Heart left ventricle (tissue), 16 donors: ENCODE measurements at regions of chrX and their contacts with region 1.

Region 1: GRCh38 chrX:16695079-16695676 is 17.3 kb downstream of the CTPS2 start:
- DNase-seq: peak in 3 of 5 donors; percentile 18 to 47 (median 40)
- ATAC-seq: peak in 2 of 4 donors; percentile 60 to 64
- H3K4me3 ChIP-seq: no peak overlapping the region
- H3K27ac ChIP-seq: no peak overlapping the region
- H3K4me1 ChIP-seq: no peaks in the 10 kb centered on the region
- H3K27me3 ChIP-seq: peaks cover 0 to 9% (median 0%) of the 10 kb centered on the region in 9 donors
- CTCF ChIP-seq: peak; percentile 65 to 93 (median 74)
- POLR2A ChIP-seq: no peak

Region 2: DNA sequence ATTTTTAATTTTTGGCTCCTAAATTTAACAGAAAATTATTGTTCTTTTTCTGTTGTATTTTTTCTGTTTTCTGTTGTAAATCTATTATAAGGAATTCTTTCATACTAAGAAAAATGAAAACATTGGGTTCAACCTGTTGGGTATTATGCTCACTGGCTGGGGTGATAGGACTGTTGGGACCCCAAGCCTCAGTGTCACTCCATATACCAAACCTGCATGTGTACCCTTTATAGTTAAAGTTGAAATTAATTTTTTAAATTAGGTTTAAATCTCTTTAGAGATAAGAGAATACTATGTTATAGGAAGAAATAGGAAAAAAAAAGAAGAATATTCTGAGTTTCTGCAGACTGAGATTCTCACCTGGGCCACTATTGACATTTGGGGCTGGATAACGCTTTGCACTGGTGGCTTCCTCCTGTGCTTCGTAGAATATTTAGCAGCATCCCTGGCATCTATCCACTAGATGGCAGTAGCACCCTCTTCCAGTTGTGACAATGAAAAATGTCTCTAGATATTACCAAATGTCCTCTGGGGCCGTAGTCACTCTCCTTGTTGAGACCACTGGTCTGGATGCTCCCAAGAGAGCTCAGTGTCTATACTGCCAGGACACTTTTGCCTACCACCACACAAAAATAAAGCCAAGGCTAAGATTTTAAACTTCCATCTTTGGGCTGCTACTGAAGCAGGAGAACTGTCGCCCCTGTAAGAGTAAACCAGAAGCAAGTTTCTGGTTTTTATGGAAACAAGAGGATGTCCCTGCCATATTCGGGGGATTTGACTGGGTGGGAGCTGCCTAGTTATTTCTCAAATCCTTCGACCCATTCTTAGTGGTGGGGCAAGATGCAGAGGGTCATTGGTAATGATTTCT is 1008.1 kb before region 1 on chrX:
- intact Hi-C with region 1: loop called in 1 of 10 experiments (anchors 10 kb)
- DNase-seq: peak in 3 of 5 donors; percentile 34 to 41 (median 36)
- ATAC-seq: peak in 3 of 4 donors; percentile 69 to 86 (median 82)
- H3K4me3 ChIP-seq: no peak overlapping the region
- H3K27ac ChIP-seq: no peak overlapping the region
- H3K4me1 ChIP-seq: peaks cover 0 to 7% (median 0%) of the 10 kb centered on the region in 12 donors
- H3K27me3 ChIP-seq: no peaks in the 10 kb centered on the region
- CTCF ChIP-seq: peak; percentile 60 to 88 (median 67)
- POLR2A ChIP-seq: no peak

Region 3: GRCh38 chrX:15761564-15762191 is 933.5 kb before region 1 on chrX:
- intact Hi-C with region 1: loop called in 2 of 10 experiments (anchors 10 kb)
- DNase-seq: peak in 1 of 5 donors; percentile 14
- ATAC-seq: peak in 1 of 4 donors; percentile 44
- H3K4me3 ChIP-seq: no peak overlapping the region
- H3K27ac ChIP-seq: no peak overlapping the region
- H3K4me1 ChIP-seq: peaks cover 0 to 3% (median 0%) of the 10 kb centered on the region in 12 donors
- H3K27me3 ChIP-seq: no peaks in the 10 kb centered on the region
- CTCF ChIP-seq: peak; percentile 41 to 78 (median 61)
- POLR2A ChIP-seq: no peak

Region 4: DNA sequence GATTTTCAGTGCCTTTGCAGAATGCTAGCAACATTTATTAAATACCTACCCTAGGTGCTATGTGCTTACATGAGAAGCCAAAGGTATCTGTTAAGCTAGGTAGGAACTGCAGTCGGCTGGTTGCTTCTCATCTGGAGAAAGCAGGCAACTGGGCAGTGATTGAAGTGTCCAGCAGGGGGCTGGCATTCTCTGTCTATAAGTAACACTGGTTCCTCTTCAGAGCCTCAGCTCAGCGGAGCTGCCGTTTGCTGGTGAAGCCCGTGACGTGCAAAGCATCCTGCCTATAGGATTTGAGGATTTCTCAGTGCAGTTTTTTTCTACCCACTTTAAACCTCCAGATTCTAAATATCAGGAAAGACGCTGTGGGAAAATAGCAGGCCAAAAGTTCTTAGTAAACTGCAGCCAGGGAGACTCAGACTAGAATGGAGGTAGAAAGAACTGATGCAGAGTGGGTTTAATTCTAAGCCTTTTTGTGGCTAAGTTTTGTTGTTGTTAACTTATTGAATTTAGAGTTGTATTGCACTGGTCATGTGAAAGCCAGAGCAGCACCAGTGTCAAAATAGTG is 571.9 kb before region 1 on chrX and contains the start of gene GRPR:
- intact Hi-C with region 1: loop called in 1 of 10 experiments (anchors 10 kb)
- DNase-seq: peak; percentile 54 to 84 (median 70)
- ATAC-seq: peak; percentile 75 to 94 (median 90)
- H3K4me3 ChIP-seq: no peak within 1 kb of the TSS
- H3K27ac ChIP-seq: no peak within 1 kb of the TSS
- H3K4me1 ChIP-seq: no peaks in the 10 kb centered on the region
- H3K27me3 ChIP-seq: peaks cover 0 to 43% (median 0%) of the 10 kb centered on the region in 9 donors
- CTCF ChIP-seq: peak; percentile 42 to 76 (median 64)
- POLR2A ChIP-seq: no peak
- total RNA-seq, gene GRPR: 0.16 to 0.58 (median 0.29) TPM

Region 5: GRCh38 chrX:16807548-16807947 is 112.4 kb after region 1 on chrX:
- intact Hi-C with region 1: no loop called
- DNase-seq: no peak
- ATAC-seq: peak in 3 of 4 donors; percentile 50 to 55 (median 54)
- H3K4me3 ChIP-seq: peak overlapping the region in 5 of 12 donors; percentile 25 to 52 (median 40)
- H3K27ac ChIP-seq: peak overlapping the region in 4 of 12 donors; percentile 9 to 42 (median 28)
- H3K4me1 ChIP-seq: peaks cover 0 to 17% (median 5%) of the 10 kb centered on the region in 12 donors
- H3K27me3 ChIP-seq: no peaks in the 10 kb centered on the region
- CTCF ChIP-seq: peak in 7 of 12 donors; percentile 13 to 44 (median 25)
- POLR2A ChIP-seq: no peak